K562 (cell line): ENCODE measurements at regions of chr1 and their contacts with region 1.

Region 1: GRCh38 chr1:42334240-42335049 is 590 bp downstream of the FOXJ3 start:
- DNase-seq: peak in 2 of 4 experiments; percentile 77 to 82
- ATAC-seq: peak; percentile 76
- H3K4me3 ChIP-seq: peak overlapping the region; percentile 85
- H3K27ac ChIP-seq: peak overlapping the region; percentile 77
- H3K4me1 ChIP-seq: peaks cover 17 to 18% of the 10 kb centered on the region in 2 experiments; a peak in 4 of 5 replicates
- H3K27me3 ChIP-seq: no peaks in the 10 kb centered on the region; a peak in 1 of 5 replicates
- CTCF ChIP-seq: peak in 1 of 3 experiments; percentile 15; a peak in 1 of 6 replicates
- EP300 ChIP-seq: no peak
- POLR2A ChIP-seq: no peak
- RAD21 ChIP-seq: peak in 1 of 2 experiments; percentile 13; a peak in 1 of 4 replicates

Region 2: GRCh38 chr1:42173155-42173933 is 161.1 kb before region 1 on chr1:
- CTCF ChIA-PET with region 1: no interaction called
- POLR2A ChIA-PET with region 1: no interaction called
- in situ Hi-C with region 1: no loop called
- intact Hi-C with region 1: loop called (anchors 1 kb)
- DNase-seq: peak; percentile 74 to 84 (median 82)
- ATAC-seq: peak; percentile 89
- H3K4me3 ChIP-seq: no peak overlapping the region
- H3K27ac ChIP-seq: no peak overlapping the region
- H3K4me1 ChIP-seq: peaks cover 0 to under 1% of the 10 kb centered on the region in 2 experiments; a peak in 2 of 5 replicates
- H3K27me3 ChIP-seq: no peaks in the 10 kb centered on the region
- CTCF ChIP-seq: peak; percentile 89 to 99 (median 96)
- EP300 ChIP-seq: no peak
- POLR2A ChIP-seq: no peak
- RAD21 ChIP-seq: peak; percentile 56 to 73

Region 3: GRCh38 chr1:42322577-42322976 is 11.9 kb before region 1 on chr1:
- CTCF ChIA-PET with region 1: no interaction called
- POLR2A ChIA-PET with region 1: interaction called, 20 read pairs
- in situ Hi-C with region 1: no loop called
- intact Hi-C with region 1: no loop called
- DNase-seq: no peak
- ATAC-seq: no peak
- H3K4me3 ChIP-seq: no peak overlapping the region
- H3K27ac ChIP-seq: peak overlapping the region; percentile 8; the same call in 1 of the 3 replicates
- H3K4me1 ChIP-seq: peaks cover 0 to 16% of the 10 kb centered on the region in 2 experiments; a peak in 2 of 5 replicates
- H3K27me3 ChIP-seq: no peaks in the 10 kb centered on the region
- CTCF ChIP-seq: no peak
- EP300 ChIP-seq: no peak
- POLR2A ChIP-seq: no peak
- RAD21 ChIP-seq: no peak

Region 4: DNA sequence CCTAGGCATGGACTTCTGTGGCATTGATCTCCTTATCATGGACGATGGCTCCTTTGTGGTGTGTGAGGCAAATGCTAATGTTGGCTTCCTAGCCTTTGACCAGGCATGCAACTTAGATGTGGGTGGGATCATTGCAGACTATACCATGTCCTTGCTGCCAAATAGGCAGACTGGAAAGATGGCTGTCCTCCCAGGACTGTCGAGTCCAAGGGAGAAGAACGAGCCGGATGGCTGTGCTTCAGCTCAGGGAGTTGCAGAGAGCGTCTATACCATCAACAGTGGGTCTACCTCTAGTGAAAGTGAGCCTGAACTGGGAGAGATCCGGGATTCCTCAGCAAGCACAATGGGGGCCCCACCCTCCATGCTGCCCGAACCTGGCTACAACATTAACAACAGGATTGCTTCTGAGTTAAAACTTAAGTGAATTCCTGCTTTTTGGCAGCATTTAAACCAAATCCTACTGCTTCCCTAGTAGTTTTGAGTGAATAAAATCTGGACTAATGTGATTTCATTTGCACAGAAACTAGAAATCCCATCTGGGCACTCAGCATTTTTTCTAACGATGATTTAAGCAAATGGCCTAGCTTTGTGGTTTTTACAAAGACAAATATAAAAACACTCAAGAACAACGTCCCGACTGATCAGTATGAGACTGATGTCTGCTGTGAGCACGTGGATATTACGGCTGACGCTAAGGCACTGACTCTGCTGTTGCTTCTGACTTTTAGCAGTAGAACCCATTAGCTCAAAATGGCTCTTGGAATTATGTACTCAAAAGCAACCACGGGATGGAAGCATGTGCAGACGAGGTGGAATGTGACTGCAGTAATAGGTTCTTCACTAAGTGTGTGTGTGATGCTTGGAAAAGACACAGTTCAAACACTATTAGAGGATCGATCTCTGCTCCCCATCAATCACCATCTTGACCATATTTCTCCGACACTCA is 80.4 kb after region 1 on chr1:
- CTCF ChIA-PET with region 1: no interaction called
- POLR2A ChIA-PET with region 1: no interaction called
- in situ Hi-C with region 1: no loop called
- intact Hi-C with region 1: no loop called
- DNase-seq: no peak
- ATAC-seq: no peak
- H3K4me3 ChIP-seq: no peak overlapping the region
- H3K27ac ChIP-seq: no peak overlapping the region
- H3K4me1 ChIP-seq: no peaks in the 10 kb centered on the region
- H3K27me3 ChIP-seq: peaks cover 32 to 36% of the 10 kb centered on the region in 2 experiments
- CTCF ChIP-seq: no peak
- EP300 ChIP-seq: no peak
- POLR2A ChIP-seq: no peak
- RAD21 ChIP-seq: no peak